Tibial artery (tissue), 4 donors: ENCODE measurements at regions of chr7 and their contacts with region 1.

Region 1: GRCh38 chr7:120792091-120792860 is 65.7 kb downstream of the TSPAN12 start:
- DNase-seq: peak; percentile 70 to 83
- H3K4me3 ChIP-seq: no peak overlapping the region
- H3K27ac ChIP-seq: no peak overlapping the region
- H3K4me1 ChIP-seq: peaks cover 0 to 3% (median 0%) of the 10 kb centered on the region in 4 donors
- H3K27me3 ChIP-seq: no peaks in the 10 kb centered on the region
- CTCF ChIP-seq: peak; percentile 67 to 82

Region 2: GRCh38 chr7:120852700-120853099 is 60.4 kb after region 1 on chr7:
- intact Hi-C with region 1: loop called (anchors 5 kb)
- DNase-seq: no peak
- H3K4me3 ChIP-seq: no peak overlapping the region
- H3K27ac ChIP-seq: no peak overlapping the region
- H3K4me1 ChIP-seq: peaks cover 0 to 12% (median 8%) of the 10 kb centered on the region in 4 donors
- H3K27me3 ChIP-seq: no peaks in the 10 kb centered on the region
- CTCF ChIP-seq: no peak

Region 3: DNA sequence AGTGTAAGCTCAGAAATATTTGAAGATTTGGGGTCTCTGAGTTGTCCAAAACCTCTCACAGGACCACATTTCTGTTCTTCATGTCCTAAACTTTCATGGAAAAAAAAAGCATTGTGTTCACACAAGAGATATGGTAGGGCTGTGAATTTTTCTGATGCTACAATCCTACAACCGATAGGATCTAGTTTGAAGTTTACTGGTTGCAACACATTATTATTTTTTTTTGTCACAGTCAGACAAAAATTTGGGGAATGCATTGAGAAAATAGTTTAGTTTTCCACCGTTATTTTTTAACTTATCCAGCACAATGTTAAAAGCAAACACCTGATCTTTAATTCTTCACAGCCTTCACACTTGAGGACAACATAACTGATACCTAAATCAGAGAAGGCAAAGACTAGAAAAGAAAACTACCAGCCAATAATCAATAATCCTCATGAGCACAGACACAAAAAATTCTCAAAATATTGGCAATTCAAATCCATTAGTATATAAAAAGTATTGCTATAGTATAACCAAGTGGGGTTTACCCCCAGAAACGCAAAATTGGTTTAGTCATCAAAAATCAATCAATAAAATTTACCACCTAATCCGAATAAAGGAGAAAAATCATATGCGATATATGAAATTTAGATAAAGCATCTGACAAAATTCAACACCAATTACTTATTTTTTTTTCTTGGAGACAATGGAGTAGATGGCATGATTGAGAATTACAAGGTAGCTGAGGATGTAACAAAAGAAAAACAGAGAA is 146.9 kb after region 1 on chr7:
- intact Hi-C with region 1: loop called (anchors 5 kb)
- DNase-seq: no peak
- H3K4me3 ChIP-seq: no peak overlapping the region
- H3K27ac ChIP-seq: no peak overlapping the region
- H3K4me1 ChIP-seq: no peaks in the 10 kb centered on the region
- H3K27me3 ChIP-seq: no peaks in the 10 kb centered on the region
- CTCF ChIP-seq: no peak

Region 4: DNA sequence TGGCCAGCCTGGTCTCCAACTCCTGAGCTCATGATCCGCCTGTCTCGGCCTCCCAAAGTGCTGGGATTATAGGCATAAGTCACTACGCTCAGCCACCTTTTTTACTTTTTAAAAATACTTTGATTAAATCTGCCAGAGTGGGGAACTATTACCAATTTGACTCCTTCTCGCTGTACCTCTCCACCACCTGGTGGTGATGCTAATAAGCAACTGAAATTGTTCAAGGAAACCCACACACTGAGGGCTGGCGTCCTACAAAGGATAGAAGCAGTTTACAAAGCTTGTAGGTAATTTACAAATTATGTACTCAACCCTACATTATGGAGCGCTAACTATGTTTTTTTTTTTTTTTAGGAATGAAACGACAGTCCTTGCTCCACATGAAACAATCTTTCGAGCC is 307.3 kb after region 1 on chr7:
- intact Hi-C with region 1: loop called (anchors 10 kb)
- DNase-seq: no peak
- H3K4me3 ChIP-seq: no peak overlapping the region
- H3K27ac ChIP-seq: no peak overlapping the region
- H3K4me1 ChIP-seq: peaks cover 0 to 6% (median 2%) of the 10 kb centered on the region in 4 donors
- H3K27me3 ChIP-seq: no peaks in the 10 kb centered on the region
- CTCF ChIP-seq: no peak